Activated CD8-positive, alpha-beta T cell treated with anti-CD3 and anti-CD28 coated beads for 36 hours (primary cell): ENCODE measurements at regions of chr5 and their contacts with region 1.

Region 1: DNA sequence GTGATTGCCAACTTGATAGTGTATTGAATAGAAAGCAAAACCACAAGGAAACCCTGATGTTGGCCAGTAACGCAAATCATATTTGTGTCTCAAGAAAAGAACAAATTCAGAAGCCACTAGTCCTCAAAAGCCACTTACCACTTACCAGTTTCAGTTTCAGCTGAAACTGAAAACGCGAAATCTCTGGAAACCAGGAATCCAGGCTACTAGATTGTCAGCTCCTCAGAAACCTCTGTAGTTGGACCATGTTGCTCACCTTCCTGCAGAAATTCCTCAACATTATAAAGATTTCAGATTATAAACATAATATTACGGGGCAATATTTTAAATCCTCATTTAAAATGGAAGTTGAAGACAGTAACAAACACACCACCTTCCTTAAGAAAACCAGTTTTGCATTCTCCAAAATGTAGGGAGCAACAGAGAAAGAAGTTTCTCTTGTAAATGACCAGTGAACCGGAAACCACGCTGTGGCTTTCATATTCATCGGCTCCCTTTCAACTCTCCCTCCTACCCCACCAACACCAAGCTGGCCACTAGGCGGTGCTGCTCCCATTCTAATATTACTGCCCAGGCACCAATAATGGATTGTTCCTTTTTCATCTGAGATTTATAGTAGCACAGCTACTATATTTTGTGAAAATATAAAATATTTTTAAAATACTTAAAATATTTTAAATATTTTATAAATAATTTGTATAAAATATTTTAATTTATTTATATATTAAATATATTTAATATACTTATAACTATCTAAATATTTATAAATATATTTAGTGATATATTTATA is 8.7 kb upstream of the TMED7 start:
- DNase-seq: peak; percentile 95
- ATAC-seq: peak; percentile 67
- H3K4me3 Mint-ChIP-seq: peak overlapping the region; percentile 29
- H3K27ac Mint-ChIP-seq: no peak overlapping the region
- H3K4me1 Mint-ChIP-seq: peaks cover 45% of the 10 kb centered on the region
- H3K27me3 Mint-ChIP-seq: peaks cover 21% of the 10 kb centered on the region
- CTCF ChIP-seq: peak; percentile 92

Region 2: GRCh38 chr5:115343855-115344254 is 290.7 kb before region 1 on chr5:
- CTCF ChIA-PET with region 1: no interaction called
- POLR2A ChIA-PET with region 1: no interaction called
- intact Hi-C with region 1: no loop called
- DNase-seq: no peak
- ATAC-seq: no peak
- H3K4me3 Mint-ChIP-seq: no peak overlapping the region
- H3K27ac Mint-ChIP-seq: no peak overlapping the region
- H3K4me1 Mint-ChIP-seq: no peaks in the 10 kb centered on the region
- H3K27me3 Mint-ChIP-seq: peaks cover 27% of the 10 kb centered on the region
- CTCF ChIP-seq: no peak

Region 3: DNA sequence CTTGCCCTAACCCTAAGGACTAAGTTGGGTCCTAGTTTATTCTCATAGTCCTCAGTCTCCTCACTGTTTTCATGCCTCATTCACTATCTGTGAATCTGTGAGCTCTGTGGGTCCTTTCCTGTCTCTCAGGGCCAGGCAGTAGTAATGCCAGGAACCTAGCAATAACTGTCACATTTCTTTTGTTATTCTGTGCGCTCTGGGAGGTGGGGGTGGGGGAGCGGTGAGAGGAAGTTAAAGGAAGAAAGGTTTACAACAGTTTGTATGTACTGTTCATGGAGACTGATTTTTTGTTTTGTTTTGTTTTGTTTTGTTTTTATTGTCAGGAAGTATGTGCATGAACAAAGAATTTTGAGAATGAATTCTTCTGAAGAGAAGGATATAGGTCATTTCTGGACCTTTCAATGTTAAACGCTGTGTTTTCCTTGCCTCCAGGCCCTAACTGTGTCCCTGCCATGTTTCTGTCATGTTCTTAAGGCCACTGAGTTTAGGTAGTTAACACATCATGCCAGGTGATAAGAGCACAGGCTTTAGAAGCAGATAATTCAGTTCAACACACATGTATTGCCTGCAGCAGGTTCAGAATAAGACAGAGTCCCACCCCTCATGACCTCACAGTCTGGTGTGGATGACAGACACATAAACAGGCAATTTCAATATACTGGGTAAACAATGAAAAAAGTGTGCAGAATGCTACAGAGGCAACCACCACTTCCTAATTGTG is 76.7 kb before region 1 on chr5:
- CTCF ChIA-PET with region 1: no interaction called
- POLR2A ChIA-PET with region 1: no interaction called
- intact Hi-C with region 1: no loop called
- DNase-seq: no peak
- ATAC-seq: no peak
- H3K4me3 Mint-ChIP-seq: no peak overlapping the region
- H3K27ac Mint-ChIP-seq: no peak overlapping the region
- H3K4me1 Mint-ChIP-seq: no peaks in the 10 kb centered on the region
- H3K27me3 Mint-ChIP-seq: peaks cover 5% of the 10 kb centered on the region
- CTCF ChIP-seq: no peak

Region 4: DNA sequence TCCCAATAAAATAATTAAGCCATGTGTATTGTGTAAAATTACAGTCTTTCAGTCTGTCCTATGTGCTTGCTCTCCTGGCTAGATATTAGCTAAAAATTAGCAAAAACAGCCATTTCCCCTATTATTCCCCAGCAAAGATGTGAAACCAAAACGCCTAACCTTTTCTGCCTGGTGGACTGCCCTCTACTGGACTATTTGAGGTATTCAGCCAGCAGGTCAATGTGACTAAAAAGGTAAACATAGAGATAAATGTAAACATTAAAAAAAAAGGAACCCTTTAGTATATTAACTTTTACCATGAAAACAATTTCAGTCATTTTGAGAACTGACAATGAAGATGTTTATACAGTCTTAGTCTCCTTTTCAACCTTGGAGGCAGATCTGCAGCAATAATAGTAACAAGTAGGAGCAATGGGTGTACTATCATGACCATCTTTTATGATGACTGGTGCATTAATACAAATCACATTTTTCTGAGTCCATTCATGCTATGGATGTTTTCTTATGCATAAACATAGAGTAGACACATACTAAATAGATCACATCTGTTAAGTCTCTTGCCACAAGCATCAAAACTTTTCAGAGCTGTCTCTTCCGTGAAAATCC is 196.7 kb after region 1 on chr5:
- CTCF ChIA-PET with region 1: interaction called, 15 read pairs
- POLR2A ChIA-PET with region 1: no interaction called
- intact Hi-C with region 1: loop called (anchors 2 kb)
- DNase-seq: peak; percentile 39
- ATAC-seq: peak; percentile 62
- H3K4me3 Mint-ChIP-seq: no peak overlapping the region
- H3K27ac Mint-ChIP-seq: no peak overlapping the region
- H3K4me1 Mint-ChIP-seq: peaks cover 13% of the 10 kb centered on the region
- H3K27me3 Mint-ChIP-seq: no peaks in the 10 kb centered on the region
- CTCF ChIP-seq: peak; percentile 73

Region 5: GRCh38 chr5:116068028-116068632 is 433.6 kb after region 1 on chr5:
- CTCF ChIA-PET with region 1: interaction called, 11 read pairs
- POLR2A ChIA-PET with region 1: interaction called, 4 read pairs
- intact Hi-C with region 1: loop called (anchors 2 kb)
- DNase-seq: peak; percentile 63
- ATAC-seq: no peak
- H3K4me3 Mint-ChIP-seq: no peak overlapping the region
- H3K27ac Mint-ChIP-seq: no peak overlapping the region
- H3K4me1 Mint-ChIP-seq: no peaks in the 10 kb centered on the region
- H3K27me3 Mint-ChIP-seq: peaks cover 20% of the 10 kb centered on the region
- CTCF ChIP-seq: peak; percentile 80